Activated CD4-positive, alpha-beta T cell treated with anti-CD3 and anti-CD28 coated beads, Interleukin-2, amount 10 ng/mL, durations not matched to agents 7 days and 5 days (primary cell): ENCODE measurements at regions of chr2 and their contacts with region 1.

Region 1: GRCh38 chr2:186590759-186591505 is 1.1 kb downstream of the ITGAV start:
- DNase-seq: no peak
- H3K4me3 Mint-ChIP-seq: peak overlapping the region; percentile 83
- H3K27ac Mint-ChIP-seq: peak overlapping the region; percentile 83
- H3K4me1 Mint-ChIP-seq: peaks cover 27% of the 10 kb centered on the region
- H3K27me3 Mint-ChIP-seq: peaks cover 3% of the 10 kb centered on the region

Region 2: GRCh38 chr2:186617771-186618170 is 26.8 kb after region 1 on chr2:
- CTCF ChIA-PET with region 1: no interaction called
- POLR2A ChIA-PET with region 1: no interaction called
- DNase-seq: no peak
- H3K4me3 Mint-ChIP-seq: no peak overlapping the region
- H3K27ac Mint-ChIP-seq: no peak overlapping the region
- H3K4me1 Mint-ChIP-seq: no peaks in the 10 kb centered on the region
- H3K27me3 Mint-ChIP-seq: no peaks in the 10 kb centered on the region

Region 3: DNA sequence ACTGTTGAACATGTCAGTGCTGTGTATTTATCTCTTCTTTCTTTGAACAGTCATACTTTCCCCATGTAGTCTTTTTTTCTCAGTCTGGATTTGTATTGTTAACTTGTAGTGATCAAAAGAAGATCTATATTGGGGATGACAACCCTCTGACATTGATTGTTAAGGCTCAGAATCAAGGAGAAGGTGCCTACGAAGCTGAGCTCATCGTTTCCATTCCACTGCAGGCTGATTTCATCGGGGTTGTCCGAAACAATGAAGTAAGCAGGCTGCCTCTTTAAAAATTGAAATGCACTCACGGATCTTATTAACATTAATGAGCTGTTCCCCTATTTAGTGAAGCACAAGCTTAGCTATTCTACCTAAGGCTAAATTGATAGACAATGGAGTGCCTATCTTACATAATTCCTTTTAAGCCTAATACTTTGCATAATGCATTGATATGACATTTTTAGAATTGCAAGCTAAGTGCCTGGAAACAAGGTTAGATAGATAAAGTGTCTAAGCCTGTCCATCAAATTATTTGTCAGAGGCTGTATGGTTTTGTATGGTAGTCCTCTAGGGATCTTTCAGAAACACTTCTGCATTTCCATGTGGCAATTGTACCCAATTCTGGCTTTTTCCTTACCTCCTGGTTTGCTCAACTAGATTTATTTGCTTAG is 73.6 kb after region 1 on chr2:
- CTCF ChIA-PET with region 1: no interaction called
- POLR2A ChIA-PET with region 1: interaction called, 12 read pairs
- DNase-seq: no peak
- H3K4me3 Mint-ChIP-seq: no peak overlapping the region
- H3K27ac Mint-ChIP-seq: no peak overlapping the region
- H3K4me1 Mint-ChIP-seq: no peaks in the 10 kb centered on the region
- H3K27me3 Mint-ChIP-seq: no peaks in the 10 kb centered on the region